Naive thymus-derived CD8-positive, alpha-beta T cell (primary cell): ENCODE measurements at regions of chr17 and their contacts with region 1.

Region 1: GRCh38 chr17:7239091-7240027 is at the start of gene PHF23:
- DNase-seq: peak; percentile 92 to 98 (median 96)
- ATAC-seq: peak; percentile 51 to 67
- H3K4me3 Mint-ChIP-seq: peak within 1 kb of the TSS; percentile 83 to 100 (median 96)
- H3K27ac Mint-ChIP-seq: peak within 1 kb of the TSS; percentile 81 to 100 (median 98)
- H3K4me1 Mint-ChIP-seq: peaks cover 46 to 75% (median 63%) of the 10 kb centered on the region in 4 donors
- H3K27me3 Mint-ChIP-seq: peaks cover 0 to 4% (median 0%) of the 10 kb centered on the region in 5 donors
- polyA plus RNA-seq, gene PHF23: 18.1 to 35.7 (median 22.2) TPM

Region 2: GRCh38 chr17:7035591-7036368 is 203.6 kb before region 1 on chr17 and contains the start of gene SLC16A13:
- POLR2A ChIA-PET with region 1: interaction called, 10 read pairs
- DNase-seq: peak; percentile 93 to 99 (median 96)
- ATAC-seq: peak; percentile 88 to 91
- H3K4me3 Mint-ChIP-seq: peak within 1 kb of the TSS; percentile 91 to 97 (median 94)
- H3K27ac Mint-ChIP-seq: peak within 1 kb of the TSS; percentile 97 to 99 (median 98)
- H3K4me1 Mint-ChIP-seq: peaks cover 30 to 71% (median 67%) of the 10 kb centered on the region in 4 donors
- H3K27me3 Mint-ChIP-seq: no peaks in the 10 kb centered on the region
- polyA plus RNA-seq, gene SLC16A13: 0.93 to 1.2 (median 0.97) TPM

Region 3: DNA sequence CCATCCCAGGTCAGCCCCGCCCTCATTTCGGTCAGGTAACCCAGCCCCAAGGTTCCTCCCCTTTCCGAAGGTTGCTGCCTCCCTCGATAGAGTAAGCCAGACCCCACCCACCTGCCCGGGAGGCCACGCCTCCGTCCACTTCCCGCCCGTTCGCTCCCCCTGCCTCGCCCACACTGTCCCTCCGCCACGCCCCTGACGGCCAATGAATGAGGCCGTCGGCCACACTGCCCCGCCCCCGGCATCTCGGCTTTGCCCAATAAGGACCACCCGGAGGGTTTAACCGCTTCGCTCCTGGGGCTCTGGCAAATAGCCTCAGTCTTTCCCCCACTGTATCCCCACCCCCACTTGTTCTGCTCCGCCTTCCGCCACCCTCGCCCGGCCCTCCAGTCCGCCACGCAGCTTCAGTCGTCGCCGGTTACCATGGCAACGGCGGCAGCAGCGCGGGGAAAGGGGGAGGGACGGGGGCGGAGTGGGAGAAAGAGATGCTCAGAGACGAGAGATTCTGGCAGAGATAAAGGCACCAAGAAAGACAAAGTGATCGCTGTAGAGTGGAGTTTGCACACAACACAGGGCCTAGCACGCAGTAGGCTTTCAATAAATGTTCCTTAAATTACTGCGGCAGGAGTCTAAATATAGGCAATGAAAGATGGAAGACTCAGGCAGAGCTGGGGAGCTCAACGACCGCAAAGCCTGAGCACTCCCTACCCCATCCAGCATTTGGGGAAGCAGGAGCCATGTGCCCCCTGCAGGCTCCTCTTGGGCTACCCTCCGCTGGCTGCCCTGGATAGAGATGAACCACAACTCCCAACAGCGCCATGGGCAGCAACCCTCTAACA is 24.8 kb before region 1 on chr17:
- POLR2A ChIA-PET with region 1: interaction called, 371 read pairs
- DNase-seq: peak; percentile 97 to 99 (median 99)
- ATAC-seq: peak; percentile 74 to 78
- H3K4me3 Mint-ChIP-seq: peak overlapping the region; percentile 85 to 98 (median 93)
- H3K27ac Mint-ChIP-seq: peak overlapping the region; percentile 95 to 100 (median 99)
- H3K4me1 Mint-ChIP-seq: peaks cover 43 to 66% (median 63%) of the 10 kb centered on the region in 4 donors
- H3K27me3 Mint-ChIP-seq: peaks cover 0 to 2% (median 0%) of the 10 kb centered on the region in 5 donors

Region 4: GRCh38 chr17:7252176-7253043 is 13.1 kb after region 1 on chr17 and contains the start of gene ELP5:
- POLR2A ChIA-PET with region 1: interaction called, 89 read pairs
- DNase-seq: peak in 8 of 10 donors; percentile 71 to 99 (median 82)
- ATAC-seq: peak; percentile 57 to 63
- H3K4me3 Mint-ChIP-seq: peak within 1 kb of the TSS; percentile 91 to 98 (median 95)
- H3K27ac Mint-ChIP-seq: peak within 1 kb of the TSS; percentile 90 to 100 (median 100)
- H3K4me1 Mint-ChIP-seq: peaks cover 22 to 51% (median 46%) of the 10 kb centered on the region in 4 donors
- H3K27me3 Mint-ChIP-seq: no peaks in the 10 kb centered on the region
- polyA plus RNA-seq, gene ELP5: 55.5 to 94.0 (median 70.8) TPM

Region 5: GRCh38 chr17:7258731-7259554 is 19.6 kb after region 1 on chr17:
- POLR2A ChIA-PET with region 1: interaction called, 17 read pairs
- DNase-seq: no peak
- ATAC-seq: no peak
- H3K4me3 Mint-ChIP-seq: peak overlapping the region in 2 of 10 donors; percentile 24 to 66
- H3K27ac Mint-ChIP-seq: peak overlapping the region; percentile 24 to 90 (median 60)
- H3K4me1 Mint-ChIP-seq: peaks cover 18 to 31% (median 30%) of the 10 kb centered on the region in 4 donors
- H3K27me3 Mint-ChIP-seq: peaks cover 0 to under 1% (median 0%) of the 10 kb centered on the region in 5 donors

Region 6: DNA sequence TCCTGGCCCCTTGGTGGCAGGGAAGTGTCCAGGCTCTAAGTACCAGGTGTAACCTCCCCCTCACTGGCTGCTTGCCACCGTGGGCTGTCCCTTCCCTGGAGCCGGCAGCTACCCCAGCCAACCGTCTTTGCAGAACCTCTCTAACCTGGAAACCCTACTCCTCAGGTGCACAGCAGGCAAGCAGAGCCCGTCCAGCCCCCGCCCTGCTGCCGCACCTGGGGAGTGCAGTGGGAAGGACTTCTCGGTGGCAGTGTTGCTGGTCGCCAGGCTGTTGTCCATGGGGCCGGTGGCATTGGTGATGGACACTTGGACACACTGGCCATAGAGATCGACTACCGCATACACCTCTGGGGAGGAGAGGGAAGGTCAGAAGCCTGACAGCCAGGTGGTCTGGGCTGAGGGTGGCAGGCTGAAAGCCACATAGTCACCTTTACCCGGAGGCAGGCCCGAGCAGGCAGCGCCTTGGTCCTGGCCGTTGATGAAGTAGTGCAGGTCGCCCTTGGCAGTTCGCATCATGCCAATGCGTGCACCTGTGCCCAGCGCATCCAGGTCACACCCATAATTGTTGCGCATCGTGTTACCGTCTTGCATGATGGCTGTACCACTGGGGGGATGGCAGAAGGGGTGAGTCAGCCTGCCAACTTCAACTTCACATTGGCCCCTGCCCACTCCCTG is 83.3 kb after region 1 on chr17:
- POLR2A ChIA-PET with region 1: no interaction called
- DNase-seq: no peak
- ATAC-seq: no peak
- H3K4me3 Mint-ChIP-seq: no peak overlapping the region
- H3K27ac Mint-ChIP-seq: peak overlapping the region in 1 of 10 donors; percentile 52
- H3K4me1 Mint-ChIP-seq: peaks cover 5 to 21% (median 8%) of the 10 kb centered on the region in 4 donors
- H3K27me3 Mint-ChIP-seq: no peaks in the 10 kb centered on the region